PC-9 (cell line): ENCODE measurements at regions of chr4 and their contacts with region 1.

Region 1: DNA sequence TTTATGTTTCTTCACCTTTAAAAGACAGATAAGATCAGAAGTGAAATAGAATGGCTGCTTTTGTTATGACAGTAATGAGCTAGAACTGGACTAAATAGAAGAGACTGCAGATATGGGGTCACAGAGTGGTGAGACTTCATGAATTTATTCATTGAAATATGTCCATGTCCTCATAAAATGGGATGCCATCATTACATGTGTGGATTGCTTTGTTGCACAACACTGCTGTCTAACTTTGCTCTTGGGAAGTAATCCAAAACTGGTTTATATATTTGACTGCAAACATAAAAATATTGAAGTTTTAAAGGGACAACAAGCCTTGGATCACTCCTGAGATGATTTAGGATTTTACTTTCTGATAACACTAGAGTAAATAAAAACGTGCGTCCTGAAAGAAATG is 209.2 kb upstream of the FAT4 start:
- DNase-seq: no peak
- H3K4me3 ChIP-seq: no peak overlapping the region
- H3K27ac ChIP-seq: no peak overlapping the region
- H3K4me1 ChIP-seq: peaks cover 11% of the 10 kb centered on the region; the same call in 1 of the 2 replicates
- H3K27me3 ChIP-seq: no peaks in the 10 kb centered on the region
- CTCF ChIP-seq: no peak

Region 2: DNA sequence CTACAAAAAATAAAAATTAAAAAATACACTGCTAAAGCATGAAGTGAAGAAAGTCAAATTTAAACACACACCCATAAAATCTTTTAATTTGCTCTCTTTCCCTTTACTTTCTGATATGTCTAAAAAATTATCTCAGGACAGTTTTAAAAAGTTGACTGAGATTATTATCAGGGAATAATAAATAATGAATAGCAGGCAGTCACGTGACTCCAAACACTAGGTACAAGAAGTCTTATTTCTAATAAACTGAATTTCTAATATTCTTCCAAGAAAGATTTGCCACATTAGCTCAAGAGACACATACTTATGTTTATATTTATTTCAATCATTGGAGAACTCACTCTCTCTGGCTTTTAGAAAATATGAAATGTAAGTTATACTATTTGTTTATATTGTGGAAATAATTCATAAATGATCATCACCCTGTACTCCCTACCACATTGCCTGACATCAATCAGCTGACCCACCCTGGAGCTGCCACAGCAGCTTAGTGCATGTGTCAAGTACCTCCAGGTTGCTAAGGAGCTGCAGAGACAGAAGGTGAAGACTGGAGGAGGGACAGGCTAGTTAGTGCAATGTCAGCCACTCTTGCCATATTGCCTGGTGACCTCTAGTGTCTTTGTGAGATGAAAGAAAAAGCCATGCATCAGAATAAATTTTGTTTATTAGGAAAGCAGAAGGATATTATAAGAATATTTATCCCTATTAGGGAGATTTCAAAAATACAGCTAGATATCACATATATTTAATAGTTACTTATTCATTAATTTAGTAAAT is 34.9 kb before region 1 on chr4:
- CTCF ChIA-PET with region 1: no interaction called
- POLR2A ChIA-PET with region 1: no interaction called
- intact Hi-C with region 1: no loop called
- DNase-seq: peak in 1 of 2 experiments; percentile 2
- H3K4me3 ChIP-seq: no peak overlapping the region
- H3K27ac ChIP-seq: no peak overlapping the region
- H3K4me1 ChIP-seq: no peaks in the 10 kb centered on the region
- H3K27me3 ChIP-seq: no peaks in the 10 kb centered on the region
- CTCF ChIP-seq: no peak

Region 3: DNA sequence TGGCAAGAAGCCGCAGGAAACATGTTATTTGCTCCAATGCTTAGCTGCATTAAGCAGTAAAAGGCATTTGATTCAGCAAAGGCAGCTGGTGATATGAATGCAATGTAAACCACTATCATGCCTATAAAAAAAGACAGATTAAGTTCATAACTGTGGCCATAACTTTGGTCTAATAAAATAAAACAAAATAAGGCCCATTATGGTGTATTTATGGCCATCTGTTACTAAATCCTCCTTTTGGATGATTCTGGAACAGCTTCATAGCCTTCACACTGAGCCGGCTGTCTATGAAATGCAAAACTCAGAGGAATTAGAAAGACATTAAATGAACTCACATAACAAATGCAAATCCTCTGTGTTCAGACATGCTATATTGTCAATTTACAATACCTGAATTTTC is 14.5 kb before region 1 on chr4:
- CTCF ChIA-PET with region 1: no interaction called
- POLR2A ChIA-PET with region 1: interaction called, 11 read pairs
- intact Hi-C with region 1: no loop called
- DNase-seq: no peak
- H3K4me3 ChIP-seq: no peak overlapping the region
- H3K27ac ChIP-seq: no peak overlapping the region
- H3K4me1 ChIP-seq: no peaks in the 10 kb centered on the region
- H3K27me3 ChIP-seq: no peaks in the 10 kb centered on the region
- CTCF ChIP-seq: no peak

Region 4: DNA sequence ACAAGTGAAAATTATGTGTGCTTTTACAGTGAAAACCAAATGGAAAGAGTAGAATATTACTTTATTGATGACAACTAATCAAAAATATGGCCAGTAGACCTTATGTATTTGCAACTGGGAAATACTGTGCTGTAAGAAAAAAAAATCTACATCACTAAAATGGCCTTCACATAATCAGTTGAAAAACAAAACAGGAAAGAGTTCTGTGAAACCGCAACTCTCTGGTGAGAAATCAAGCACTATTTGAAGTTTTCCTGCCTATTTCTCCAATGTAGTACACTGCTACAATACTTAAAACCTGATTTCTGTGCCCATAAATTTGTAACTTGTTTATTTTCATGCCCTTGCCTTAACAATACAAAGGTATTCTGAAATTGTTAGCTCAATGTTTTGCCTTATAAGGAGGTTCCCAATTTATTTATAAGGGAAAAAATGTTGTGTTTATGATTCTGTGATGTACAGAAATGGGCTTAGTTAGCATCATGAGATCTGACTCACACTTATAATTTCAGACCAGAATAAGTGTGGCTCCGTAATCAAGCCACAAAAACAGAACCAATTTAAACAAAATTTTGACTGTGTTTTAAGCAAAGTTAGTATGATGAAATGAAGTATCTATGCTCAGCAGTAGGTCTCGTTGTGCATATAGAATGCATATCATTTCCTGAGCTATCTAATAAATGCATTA is 356.3 kb after region 1 on chr4:
- CTCF ChIA-PET with region 1: no interaction called
- POLR2A ChIA-PET with region 1: no interaction called
- intact Hi-C with region 1: no loop called
- DNase-seq: no peak
- H3K4me3 ChIP-seq: no peak overlapping the region
- H3K27ac ChIP-seq: no peak overlapping the region
- H3K4me1 ChIP-seq: no peaks in the 10 kb centered on the region
- H3K27me3 ChIP-seq: no peaks in the 10 kb centered on the region
- CTCF ChIP-seq: no peak